Left colon (tissue), 2 donors: ENCODE measurements at regions of chr1 and their contacts with region 1.

Region 1: DNA sequence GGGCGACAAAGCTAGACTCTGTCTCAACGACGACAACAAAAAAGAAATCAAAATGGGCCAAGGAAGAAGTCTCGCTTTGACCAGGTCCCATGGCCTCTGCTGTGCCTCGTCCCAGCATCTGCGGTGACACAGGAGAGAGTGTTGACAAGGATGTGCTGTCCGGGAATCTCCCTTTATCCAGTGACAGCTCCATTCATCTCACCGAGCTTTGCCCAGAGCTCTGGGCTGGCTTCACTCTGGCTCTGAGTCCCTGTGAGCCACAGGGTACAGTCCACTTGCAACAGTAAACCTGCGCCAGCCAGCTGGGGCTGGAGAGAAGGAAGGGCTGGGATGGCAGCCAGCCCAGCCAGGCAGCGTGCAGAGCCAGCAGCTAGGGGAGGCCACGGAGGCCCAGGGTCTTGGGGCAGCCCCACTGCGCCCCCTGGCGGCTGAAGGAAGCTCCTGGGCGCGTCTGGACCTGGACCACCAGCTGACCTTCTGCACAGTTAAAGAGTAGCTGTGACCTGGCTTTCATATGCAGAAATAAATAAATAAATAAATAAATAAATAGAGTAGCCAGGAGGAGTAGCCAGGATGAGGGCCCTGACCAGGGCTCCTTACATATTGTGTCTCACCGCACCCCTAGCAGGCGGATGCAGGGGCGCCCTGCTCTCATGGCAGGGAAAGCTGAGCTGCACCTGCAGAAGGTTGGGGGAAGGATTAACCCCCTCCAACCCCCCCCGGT is 29.7 kb downstream of the ENO1 start:
- DNase-seq: peak; percentile 94
- ATAC-seq: peak; percentile 96

Region 2: GRCh38 chr1:8560611-8561544 is 287.9 kb before region 1 on chr1:
- intact Hi-C with region 1: loop called in 1 of 2 experiments (anchors 5 kb)
- DNase-seq: no peak
- ATAC-seq: peak; percentile 83

Region 3: GRCh38 chr1:8739377-8739776 is 109.4 kb before region 1 on chr1:
- intact Hi-C with region 1: loop called in 1 of 2 experiments (anchors 10 kb)
- DNase-seq: no peak
- ATAC-seq: no peak